GM10248 (cell line): ENCODE measurements at regions of chr3 and their contacts with region 1.

Region 1: DNA sequence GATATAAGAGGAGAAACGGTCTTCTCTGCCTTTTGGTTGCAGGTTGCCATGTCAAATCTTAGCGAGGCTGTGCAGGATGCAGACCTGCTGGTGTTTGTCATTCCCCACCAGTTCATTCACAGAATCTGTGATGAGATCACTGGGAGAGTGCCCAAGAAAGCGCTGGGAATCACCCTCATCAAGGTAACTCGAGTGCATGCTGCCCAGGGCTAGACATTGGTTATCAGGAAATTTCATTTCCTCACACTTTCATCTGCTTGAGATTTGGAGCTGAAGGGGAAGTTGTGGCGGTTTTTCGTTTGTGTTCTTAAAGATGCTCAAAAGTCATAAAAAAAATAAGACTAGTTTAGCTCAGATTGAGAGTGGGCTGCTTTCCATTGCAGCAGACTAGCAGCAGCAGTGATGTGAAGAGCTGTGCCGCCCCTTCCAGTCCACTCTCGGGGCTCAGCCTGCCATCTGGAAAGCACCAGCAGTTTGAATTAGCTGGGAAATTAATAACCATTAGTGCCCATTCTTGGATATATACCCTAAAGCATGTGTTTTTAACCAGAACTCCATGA is 32.2 kb downstream of the GPD1L start:
- DNase-seq: no peak
- CTCF ChIP-seq: no peak

Region 2: DNA sequence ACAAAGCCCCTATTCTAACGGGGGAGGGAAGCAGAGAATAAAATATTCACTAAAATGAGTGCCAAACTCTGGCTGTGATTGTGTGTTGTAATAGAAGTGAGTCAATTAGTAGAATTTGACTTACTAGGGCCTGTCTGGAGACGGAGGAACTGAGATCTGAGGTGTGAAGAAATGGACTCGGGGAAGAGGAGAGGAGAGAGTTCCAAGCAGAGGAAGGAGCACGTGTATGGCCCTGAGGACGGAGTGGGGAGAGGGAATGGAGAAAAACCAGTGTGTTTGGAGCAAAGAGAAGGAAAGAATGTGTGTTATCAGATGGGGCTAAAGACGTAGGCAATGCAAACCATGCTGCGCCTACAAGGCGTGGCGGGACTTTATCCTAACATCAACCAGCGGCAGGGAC is 246.7 kb before region 1 on chr3:
- CTCF ChIA-PET with region 1: no interaction called
- POLR2A ChIA-PET with region 1: no interaction called
- DNase-seq: no peak
- CTCF ChIP-seq: no peak

Region 3: DNA sequence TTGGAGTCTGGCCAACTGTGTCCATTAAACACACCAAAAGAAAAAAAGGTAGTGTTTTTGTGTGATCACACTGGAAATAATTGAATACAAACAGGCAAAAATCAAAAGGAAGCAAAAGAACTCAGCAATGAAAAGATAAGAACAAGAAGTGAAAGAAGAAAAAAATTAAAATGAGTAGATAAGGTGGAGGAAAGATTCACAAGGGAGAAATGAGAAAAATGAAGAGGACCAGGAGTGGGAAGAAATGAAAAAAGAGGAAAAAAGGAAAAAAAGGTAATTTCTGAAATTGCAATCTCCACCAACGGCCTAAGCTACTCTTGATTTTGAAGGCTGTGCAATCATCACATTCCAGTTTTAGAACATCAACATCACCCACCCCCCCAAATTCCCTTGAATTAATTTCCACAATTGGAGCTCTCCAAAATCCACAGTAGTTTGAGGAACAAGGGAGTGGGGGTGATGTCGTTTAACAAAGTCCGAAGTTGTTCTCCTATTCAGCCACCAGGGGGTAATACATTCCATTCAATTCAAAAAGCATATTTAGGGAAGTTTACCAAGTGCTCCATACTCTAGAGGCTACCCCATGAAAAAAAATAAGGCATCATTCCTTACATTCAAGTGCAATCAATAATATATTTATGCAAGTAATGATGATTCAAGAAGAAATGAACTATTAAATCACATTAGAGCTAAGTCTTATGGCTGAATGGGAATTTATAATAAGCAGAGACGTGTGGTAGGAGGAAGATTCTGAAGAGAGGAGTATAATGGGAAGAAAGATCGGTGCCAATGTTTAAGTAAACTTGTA is 119.7 kb before region 1 on chr3:
- CTCF ChIA-PET with region 1: interaction called, 22 read pairs
- POLR2A ChIA-PET with region 1: no interaction called
- DNase-seq: peak; percentile 42
- CTCF ChIP-seq: peak; percentile 53